AG04449 (cell line): ENCODE measurements at regions of chr10 and their contacts with region 1.

Region 1: GRCh38 chr10:97037365-97038361 is 148.1 kb downstream of the SLIT1 start:
- DNase-seq: no peak
- H3K4me3 ChIP-seq: peak overlapping the region; percentile 51
- CTCF ChIP-seq: peak; percentile 88

Region 2: GRCh38 chr10:96910488-96911395 is 126.9 kb before region 1 on chr10:
- CTCF ChIA-PET with region 1: interaction called, 10 read pairs
- POLR2A ChIA-PET with region 1: no interaction called
- DNase-seq: no peak
- H3K4me3 ChIP-seq: no peak overlapping the region
- CTCF ChIP-seq: peak; percentile 27

Region 3: DNA sequence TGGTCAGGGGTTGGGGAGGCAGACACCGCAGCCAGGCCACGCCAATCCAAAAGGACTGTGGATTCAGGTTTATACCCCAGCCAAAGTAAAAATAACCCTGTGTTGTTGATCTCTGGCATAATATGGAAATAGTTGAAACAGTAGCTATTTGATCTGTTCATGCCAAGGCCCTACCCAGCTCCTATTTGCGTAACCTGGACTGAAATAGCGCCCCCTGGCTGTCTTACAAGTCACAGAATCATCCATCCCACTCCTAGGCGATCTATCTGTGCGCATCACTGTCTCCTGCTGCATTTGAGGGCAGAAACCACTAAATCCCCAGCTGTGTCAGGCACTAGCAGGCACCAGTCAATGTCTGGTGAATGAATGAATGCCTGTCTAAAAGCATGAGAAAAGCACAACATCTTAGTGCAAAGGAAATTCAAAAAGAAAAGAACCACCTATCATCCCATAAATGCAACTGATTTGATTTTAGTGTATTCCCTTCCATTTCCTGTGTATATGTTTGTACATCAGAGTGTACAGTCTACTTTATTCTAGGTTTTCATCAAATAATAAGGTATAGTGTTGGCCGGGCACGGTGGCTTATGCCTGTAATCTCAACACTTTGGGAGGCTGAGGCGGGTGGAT is 11.9 kb before region 1 on chr10:
- CTCF ChIA-PET with region 1: interaction called, 153 read pairs
- POLR2A ChIA-PET with region 1: no interaction called
- DNase-seq: no peak
- H3K4me3 ChIP-seq: no peak overlapping the region
- CTCF ChIP-seq: peak; percentile 44

Region 4: DNA sequence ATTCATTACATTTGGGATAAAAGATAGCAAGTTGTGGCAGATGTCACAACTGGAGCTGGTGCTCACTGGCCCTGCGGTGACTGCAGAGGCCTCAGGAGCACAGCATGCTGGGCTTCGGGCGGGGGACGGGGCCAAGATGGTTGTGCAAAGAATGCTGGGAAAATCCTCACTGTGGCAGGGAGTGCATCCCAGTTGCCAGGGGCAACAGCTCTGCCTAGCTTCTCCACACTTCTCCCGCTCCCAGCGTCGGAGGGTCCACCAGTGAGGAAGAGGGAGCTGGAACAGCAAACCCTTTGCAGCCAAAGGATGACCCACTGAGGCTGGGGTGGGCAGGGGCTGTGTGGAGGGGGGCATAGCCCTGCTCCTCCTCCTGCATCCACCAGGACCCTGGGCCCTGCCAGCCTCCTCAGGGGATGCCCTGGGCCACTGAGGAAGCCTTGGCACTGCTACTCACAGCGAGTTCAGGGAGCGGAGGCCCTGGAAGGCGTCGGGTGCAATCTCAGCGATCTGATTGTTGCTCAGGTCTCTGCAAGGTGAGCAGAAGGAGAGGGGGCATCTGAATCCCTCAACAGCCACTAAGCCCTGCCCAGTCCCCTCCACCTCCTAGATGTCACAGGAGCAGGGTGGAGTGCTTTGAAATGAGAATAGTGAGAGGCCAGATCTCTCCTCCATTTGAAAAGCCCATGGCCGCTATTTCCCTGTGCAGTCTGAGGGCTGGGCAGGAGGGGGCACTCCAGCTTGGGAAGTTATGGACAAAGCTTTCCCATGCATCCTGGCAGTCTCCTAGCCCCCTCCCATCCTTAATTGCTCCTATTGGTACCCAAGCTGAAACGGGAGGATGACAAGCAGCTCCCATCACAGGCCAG is 21.6 kb after region 1 on chr10:
- CTCF ChIA-PET with region 1: interaction called, 17 read pairs
- POLR2A ChIA-PET with region 1: no interaction called
- DNase-seq: no peak
- H3K4me3 ChIP-seq: no peak overlapping the region
- CTCF ChIP-seq: no peak

Region 5: DNA sequence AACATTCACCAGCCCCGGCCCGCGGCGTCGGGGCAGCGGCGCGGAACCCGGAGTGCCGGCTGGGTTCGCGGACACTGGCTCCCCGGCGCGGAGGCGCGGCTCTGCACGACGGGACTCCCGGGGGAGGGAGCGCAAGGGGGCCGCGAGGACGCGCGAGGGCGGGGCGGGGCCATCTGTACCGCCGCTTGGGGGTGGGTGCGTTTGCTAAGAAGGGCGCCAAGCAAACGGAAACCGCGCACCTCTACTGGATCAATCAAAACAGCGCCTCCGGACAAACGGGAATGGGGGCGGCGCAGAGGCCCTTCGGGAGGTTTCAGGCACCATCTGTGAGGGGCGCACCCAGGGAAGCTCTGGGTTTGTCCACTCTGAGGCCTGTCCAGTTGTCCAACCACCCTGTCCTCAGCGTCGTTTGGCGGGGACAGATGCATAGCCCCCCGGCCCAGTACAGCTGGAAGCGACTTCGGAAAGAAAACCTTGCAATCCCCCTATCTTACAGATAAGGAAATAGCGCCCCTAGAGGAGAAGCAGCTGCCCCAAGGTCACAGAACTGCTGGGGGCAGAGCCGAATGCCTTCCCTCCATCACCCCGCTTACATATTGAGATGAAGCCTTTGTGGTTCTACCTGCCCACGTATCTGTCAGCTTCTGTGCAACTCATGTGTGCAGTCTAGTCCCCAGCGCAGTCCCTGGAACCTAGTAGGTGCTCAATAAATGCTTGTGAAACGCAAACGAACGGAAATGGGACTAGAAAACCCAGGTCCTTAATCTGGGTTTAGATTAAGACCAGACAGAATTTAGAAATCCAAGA is 158.8 kb after region 1 on chr10:
- CTCF ChIA-PET with region 1: interaction called, 10 read pairs
- POLR2A ChIA-PET with region 1: no interaction called
- DNase-seq: no peak
- H3K4me3 ChIP-seq: peak overlapping the region; percentile 56
- CTCF ChIP-seq: peak; percentile 69

Region 6: GRCh38 chr10:97234400-97234799 is 196.7 kb after region 1 on chr10:
- CTCF ChIA-PET with region 1: interaction called, 41 read pairs
- POLR2A ChIA-PET with region 1: no interaction called
- DNase-seq: no peak
- H3K4me3 ChIP-seq: no peak overlapping the region
- CTCF ChIP-seq: peak; percentile 45